ENCODE measurements at regions of chr2 and their contacts with region 1.

Region 1: GRCh38 chr2:205885492-205886099 is 200.4 kb downstream of the INO80D start:
- DNase-seq: peak; percentile 86

Region 2: GRCh38 chr2:205776139-205776538 is 109.5 kb before region 1 on chr2:
- intact Hi-C with region 1: loop called (anchors 2 kb)
- DNase-seq: no peak

Measured in cardiac septum (tissue), 1 donor.